ENCODE measurements at regions of chr7 and their contacts with region 1.

Region 1: DNA sequence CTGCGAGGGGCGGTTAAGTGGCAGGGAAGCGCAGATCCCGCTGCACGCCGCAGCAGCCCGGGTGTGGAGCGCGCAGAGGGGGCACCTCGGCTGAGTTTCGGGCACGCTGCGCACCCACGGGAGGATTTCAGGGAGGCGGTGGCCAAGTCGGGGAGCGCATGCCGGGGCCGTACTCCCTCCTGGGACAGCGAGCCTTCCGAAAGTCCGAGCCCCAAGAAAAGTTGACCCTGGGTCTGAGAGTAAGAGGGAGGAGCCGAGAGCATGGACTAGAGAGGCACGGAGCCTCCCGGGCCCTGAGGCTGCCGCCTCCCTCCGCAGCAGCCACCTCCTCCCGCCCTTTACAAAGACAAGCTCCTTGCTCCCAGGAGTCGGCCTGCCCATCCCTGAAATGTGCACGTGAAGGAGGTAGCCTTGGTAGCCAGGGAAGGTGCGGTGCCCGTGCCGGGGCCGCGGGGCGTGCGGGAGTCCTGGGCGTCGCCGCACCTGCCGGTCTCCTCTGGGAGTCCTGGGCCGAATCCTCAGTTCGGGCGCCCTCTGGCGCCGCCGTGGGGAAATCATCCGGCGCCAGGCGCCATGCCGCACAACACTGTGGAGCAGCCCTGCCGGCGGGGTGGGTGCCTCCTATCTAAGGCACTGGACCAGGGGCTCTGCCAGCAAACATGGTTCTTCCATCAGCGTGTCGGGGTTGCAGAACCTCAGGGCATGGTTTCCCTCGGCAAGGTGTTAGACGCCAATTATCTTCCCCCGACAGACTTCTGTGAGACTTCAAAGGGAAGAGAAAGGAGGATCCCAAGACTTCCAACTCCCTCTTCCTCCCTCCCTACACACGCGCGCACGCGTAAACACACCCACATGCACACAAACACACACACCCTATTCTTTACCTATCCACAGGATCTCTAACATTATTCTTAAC is 104.0 kb downstream of the TRIL start:
- DNase-seq: peak; percentile 88
- ATAC-seq: peak; percentile 97 to 99
- H3K4me3 ChIP-seq: peak overlapping the region; percentile 63
- H3K27ac ChIP-seq: no peak overlapping the region
- H3K4me1 ChIP-seq: peaks cover 7% of the 10 kb centered on the region
- H3K27me3 ChIP-seq: peaks cover 17% of the 10 kb centered on the region
- CTCF ChIP-seq: peak; percentile 93

Region 2: DNA sequence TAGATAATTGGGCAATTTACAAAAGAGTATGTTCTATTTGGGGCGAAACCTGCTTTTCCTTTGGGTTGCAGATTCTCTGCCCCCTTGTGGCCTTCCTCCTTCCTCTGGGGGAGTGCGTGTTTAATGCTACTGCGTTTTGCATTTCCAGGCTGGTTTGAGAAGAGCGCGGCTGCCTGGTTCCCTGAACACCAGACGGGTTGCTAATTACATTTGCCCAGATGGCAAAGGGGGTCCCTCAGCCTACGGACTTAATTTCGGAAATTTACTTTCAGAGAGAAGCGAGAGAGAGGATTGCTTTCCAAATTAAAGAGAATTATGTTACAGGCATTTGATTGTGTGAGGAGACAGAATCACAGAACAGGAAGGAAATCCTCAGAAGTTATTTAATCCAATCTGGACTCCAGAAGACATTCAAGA is 581.6 kb before region 1 on chr7:
- intact Hi-C with region 1: no loop called
- DNase-seq: peak; percentile 46
- ATAC-seq: no peak
- H3K4me3 ChIP-seq: no peak overlapping the region
- H3K27ac ChIP-seq: no peak overlapping the region
- H3K4me1 ChIP-seq: no peaks in the 10 kb centered on the region
- H3K27me3 ChIP-seq: no peaks in the 10 kb centered on the region
- CTCF ChIP-seq: peak; percentile 64

Region 3: DNA sequence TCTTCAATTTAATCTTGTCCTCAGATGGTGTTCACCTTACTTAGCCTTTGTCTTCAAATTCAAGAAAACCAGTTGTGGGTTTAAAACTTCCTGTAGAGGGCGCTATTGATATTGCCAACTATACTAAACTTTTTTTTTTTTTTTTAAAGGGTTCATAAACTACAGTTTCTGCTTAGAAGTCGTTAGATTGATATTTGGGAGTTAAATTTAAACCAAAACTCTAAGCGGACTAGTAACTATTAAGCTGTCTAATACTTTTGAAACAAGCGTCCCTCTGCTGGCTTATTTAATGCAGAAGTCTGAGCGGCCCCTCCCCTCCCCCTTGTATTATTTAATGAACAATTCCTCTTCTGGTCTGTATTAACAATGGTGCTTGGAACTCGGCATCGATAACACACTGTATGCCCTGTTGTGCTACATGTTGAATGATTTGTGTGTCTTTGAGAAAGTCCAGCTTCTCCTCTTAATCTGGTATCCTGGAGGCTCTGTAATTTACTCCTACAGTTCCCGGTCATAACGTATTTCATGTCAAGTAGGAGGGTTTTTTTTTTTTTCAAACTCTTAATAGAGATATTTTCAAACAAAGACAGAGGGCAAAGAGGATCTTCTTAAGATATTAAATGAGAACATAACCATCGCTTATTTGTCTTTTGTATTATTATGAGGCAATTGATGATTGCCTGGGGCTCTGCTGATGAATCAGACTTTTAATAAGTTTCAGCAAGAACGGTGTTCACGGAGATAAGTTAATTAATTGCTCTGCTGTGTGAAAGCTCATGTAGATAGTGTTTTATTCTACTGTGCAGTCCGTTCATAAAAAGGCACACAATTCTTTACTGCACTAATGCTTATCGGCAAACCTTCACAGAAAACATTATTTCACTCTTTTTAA is 464.3 kb before region 1 on chr7:
- intact Hi-C with region 1: loop called (anchors 5 kb)
- DNase-seq: no peak
- ATAC-seq: peak; percentile 38 to 48
- H3K4me3 ChIP-seq: peak overlapping the region; percentile 22
- H3K27ac ChIP-seq: no peak overlapping the region
- H3K4me1 ChIP-seq: peaks cover 6% of the 10 kb centered on the region
- H3K27me3 ChIP-seq: peaks cover 9% of the 10 kb centered on the region
- CTCF ChIP-seq: peak; percentile 78